H1 (cell line): ENCODE measurements at regions of chr13 and their contacts with region 1.

Region 1: DNA sequence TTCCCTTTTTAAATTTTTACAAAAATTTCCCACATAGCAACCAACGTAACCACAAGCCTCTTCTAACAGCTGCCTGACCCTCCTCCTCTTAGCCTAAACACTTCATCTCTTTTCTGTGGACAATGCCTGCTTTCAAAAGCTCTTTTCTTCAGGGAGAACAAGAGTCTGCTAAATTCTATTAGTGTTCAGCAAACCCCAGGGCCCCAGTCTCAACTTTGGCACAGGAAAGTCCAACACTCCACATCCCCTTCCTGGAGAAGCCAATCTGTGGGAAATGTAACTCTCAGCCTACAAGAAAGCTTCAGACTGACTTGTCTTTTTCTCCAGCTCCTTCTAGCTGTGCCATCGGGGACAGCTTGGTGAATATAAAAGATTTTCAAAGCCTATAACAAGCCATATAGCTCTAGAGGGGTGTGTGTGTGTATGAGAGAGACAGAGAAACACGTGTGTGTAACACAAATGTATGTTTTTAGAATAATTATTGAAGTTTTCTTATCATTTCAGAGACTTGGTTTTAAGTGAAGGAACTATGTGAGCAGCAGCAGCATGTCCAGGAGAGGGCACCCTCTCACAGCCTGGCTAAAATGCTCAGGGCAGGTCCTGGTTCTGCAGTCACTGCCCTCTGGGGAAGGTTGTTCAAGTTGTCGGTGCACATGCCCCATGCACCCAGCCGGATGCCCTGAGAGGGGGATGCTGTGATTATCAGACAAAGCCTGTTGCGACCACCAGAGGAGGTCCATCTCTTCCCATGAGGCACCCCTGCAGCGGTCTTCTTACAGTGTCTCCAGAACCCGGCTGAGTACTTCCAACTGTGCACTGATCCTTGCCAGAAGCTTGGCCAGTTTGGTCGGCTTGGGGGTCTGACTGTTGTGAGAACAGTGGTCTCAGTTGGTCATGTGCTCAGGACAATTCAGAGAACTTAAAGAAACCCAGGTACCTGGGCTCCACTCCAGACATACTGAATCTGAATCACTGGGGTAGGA is 34.4 kb downstream of the CCDC70 start:
- DNase-seq: peak; percentile 51 to 69
- H3K4me3 ChIP-seq: no peak overlapping the region
- H3K27ac ChIP-seq: no peak overlapping the region
- H3K4me1 ChIP-seq: 0 out of 7 replicates have a peak, but pooled peaks cover 0 to 4% (median 0%) of the 10 kb centered on the region in 4 experiments
- H3K27me3 ChIP-seq: no peaks in the 10 kb centered on the region
- CTCF ChIP-seq: peak; percentile 86 to 93 (median 88)
- EP300 ChIP-seq: no peak
- POLR2A ChIP-seq: no peak
- RAD21 ChIP-seq: peak; percentile 88 to 92

Region 2: GRCh38 chr13:51861723-51862300 is 34.4 kb before region 1 on chr13 and contains the start of gene CCDC70:
- CTCF ChIA-PET with region 1: interaction called, 11 read pairs
- POLR2A ChIA-PET with region 1: no interaction called
- DNase-seq: no peak
- H3K4me3 ChIP-seq: no peak within 1 kb of the TSS
- H3K27ac ChIP-seq: no peak within 1 kb of the TSS
- H3K4me1 ChIP-seq: no peaks in the 10 kb centered on the region
- H3K27me3 ChIP-seq: peaks cover 0 to 2% (median 0%) of the 10 kb centered on the region in 4 experiments; a peak in 1 of 7 replicates
- CTCF ChIP-seq: no peak
- EP300 ChIP-seq: no peak
- POLR2A ChIP-seq: no peak
- RAD21 ChIP-seq: no peak
- total RNA-seq, gene CCDC70: not detected in 2 replicates

Region 3: DNA sequence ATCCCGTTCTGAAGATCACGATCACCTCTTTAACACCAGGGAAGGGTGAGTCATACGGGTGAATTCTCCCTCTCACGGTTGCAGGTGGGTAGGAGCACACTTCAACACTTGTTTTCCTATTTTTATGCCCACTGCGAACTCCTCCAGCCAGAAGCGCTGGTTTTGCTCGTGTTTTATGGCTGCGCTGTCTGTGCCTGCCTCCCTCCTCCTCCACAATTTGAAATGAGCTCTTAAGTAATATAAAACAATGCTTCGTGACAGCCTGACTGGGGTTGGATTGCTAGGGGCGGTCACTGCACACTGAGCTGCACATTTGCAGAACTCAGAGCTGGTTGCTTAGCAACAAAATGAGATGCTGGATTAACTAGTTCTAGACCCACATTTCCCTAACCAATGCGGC is 21.5 kb before region 1 on chr13:
- CTCF ChIA-PET with region 1: interaction called, 11 read pairs
- POLR2A ChIA-PET with region 1: no interaction called
- DNase-seq: no peak
- H3K4me3 ChIP-seq: no peak overlapping the region
- H3K27ac ChIP-seq: no peak overlapping the region
- H3K4me1 ChIP-seq: no peaks in the 10 kb centered on the region
- H3K27me3 ChIP-seq: no peaks in the 10 kb centered on the region; a peak in 1 of 7 replicates
- CTCF ChIP-seq: no peak
- EP300 ChIP-seq: no peak
- POLR2A ChIP-seq: no peak
- RAD21 ChIP-seq: no peak

Region 4: DNA sequence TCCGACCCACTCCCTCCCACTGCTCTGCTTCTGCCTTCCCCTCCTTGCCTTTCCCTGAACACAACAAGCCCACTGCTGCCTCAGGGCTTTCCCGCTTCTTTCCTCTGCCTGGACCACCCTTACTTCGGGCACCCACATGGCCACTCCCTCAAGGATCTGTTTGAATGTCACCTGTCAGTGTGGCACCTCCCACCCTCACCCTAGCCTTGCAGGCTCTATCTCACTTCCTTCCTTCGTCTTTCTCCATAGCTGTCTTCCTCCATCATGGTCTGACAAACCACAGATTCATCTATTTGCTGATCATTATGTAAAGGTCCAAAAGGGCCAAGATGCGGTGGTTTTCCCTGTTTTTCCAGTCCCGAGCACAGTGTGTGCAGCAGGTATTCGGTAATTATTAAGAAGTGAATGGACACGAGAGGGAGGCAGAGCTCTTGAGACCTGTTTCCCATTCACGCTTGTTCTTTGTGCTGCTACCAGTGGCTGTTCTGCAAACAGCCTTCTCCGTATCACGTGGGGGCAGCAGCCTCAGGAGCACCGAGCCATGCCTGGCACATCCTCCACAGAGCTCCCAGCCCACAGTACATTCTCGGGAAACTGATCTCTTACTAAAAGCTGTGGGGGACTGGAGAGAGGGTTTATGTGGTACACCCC is 15.8 kb after region 1 on chr13:
- CTCF ChIA-PET with region 1: interaction called, 71 read pairs
- POLR2A ChIA-PET with region 1: interaction called, 3 read pairs
- DNase-seq: no peak
- H3K4me3 ChIP-seq: no peak overlapping the region
- H3K27ac ChIP-seq: no peak overlapping the region
- H3K4me1 ChIP-seq: no peaks in the 10 kb centered on the region; a peak in 2 of 7 replicates
- H3K27me3 ChIP-seq: no peaks in the 10 kb centered on the region
- CTCF ChIP-seq: no peak
- EP300 ChIP-seq: no peak
- POLR2A ChIP-seq: no peak
- RAD21 ChIP-seq: no peak

Region 5: DNA sequence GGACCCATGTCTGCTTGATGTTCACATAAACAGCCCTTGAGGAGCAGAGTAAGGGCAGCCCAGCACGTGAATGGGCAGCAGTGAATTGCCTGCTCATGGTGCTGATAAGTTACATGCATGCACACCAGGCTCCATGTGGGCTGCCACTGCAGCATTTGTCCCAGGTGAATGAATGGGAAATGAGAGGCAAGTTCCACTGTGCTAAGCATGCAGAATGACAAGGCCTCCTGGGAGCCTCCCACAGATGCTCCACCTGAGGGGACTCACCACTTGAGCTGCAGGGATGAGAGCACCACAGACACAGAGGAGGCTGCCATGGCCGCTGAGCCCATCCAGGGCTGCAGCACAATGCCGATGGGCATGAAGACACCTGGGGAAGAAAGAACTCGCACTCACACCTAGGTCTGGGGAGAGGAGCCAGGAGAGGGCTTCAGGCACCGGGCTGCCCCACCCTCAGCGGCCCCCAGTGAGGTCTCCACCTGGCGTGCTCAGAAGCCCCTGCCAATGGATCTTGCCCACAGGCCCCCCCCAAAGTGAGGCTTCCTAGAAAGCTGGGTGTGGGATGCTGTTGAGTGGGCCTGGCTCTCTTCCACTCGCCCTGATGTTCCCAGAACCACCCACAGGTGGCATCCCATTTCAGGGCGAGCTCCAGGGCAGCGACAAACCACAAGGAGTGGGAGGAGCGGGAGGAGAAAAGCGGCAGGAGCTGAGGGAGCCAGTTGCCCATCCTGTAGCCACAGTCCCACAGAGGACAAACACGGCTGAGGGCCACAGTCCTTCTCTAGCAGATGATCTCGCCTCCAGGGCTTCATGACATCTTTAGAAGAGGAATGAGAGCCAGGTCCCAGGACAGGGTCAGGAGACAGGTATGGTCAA is 39.4 kb after region 1 on chr13:
- CTCF ChIA-PET with region 1: interaction called, 15 read pairs
- POLR2A ChIA-PET with region 1: no interaction called
- DNase-seq: peak in 1 of 2 experiments; percentile 74
- H3K4me3 ChIP-seq: no peak overlapping the region
- H3K27ac ChIP-seq: no peak overlapping the region
- H3K4me1 ChIP-seq: no peaks in the 10 kb centered on the region
- H3K27me3 ChIP-seq: no peaks in the 10 kb centered on the region
- CTCF ChIP-seq: peak; percentile 69 to 74 (median 73)
- EP300 ChIP-seq: no peak
- POLR2A ChIP-seq: no peak
- RAD21 ChIP-seq: peak; percentile 66 to 76